Activated naive CD4-positive, alpha-beta T cell treated with anti-CD3 and anti-CD28 coated beads for 36 hours (primary cell): ENCODE measurements at regions of chr4 and their contacts with region 1.

Region 1: GRCh38 chr4:145061318-145061920 is 36.6 kb downstream of the ANAPC10 start:
- DNase-seq: no peak
- H3K4me3 Mint-ChIP-seq: no peak overlapping the region
- H3K27ac Mint-ChIP-seq: no peak overlapping the region
- H3K4me1 Mint-ChIP-seq: peaks cover 23% of the 10 kb centered on the region
- H3K27me3 Mint-ChIP-seq: no peaks in the 10 kb centered on the region

Region 2: DNA sequence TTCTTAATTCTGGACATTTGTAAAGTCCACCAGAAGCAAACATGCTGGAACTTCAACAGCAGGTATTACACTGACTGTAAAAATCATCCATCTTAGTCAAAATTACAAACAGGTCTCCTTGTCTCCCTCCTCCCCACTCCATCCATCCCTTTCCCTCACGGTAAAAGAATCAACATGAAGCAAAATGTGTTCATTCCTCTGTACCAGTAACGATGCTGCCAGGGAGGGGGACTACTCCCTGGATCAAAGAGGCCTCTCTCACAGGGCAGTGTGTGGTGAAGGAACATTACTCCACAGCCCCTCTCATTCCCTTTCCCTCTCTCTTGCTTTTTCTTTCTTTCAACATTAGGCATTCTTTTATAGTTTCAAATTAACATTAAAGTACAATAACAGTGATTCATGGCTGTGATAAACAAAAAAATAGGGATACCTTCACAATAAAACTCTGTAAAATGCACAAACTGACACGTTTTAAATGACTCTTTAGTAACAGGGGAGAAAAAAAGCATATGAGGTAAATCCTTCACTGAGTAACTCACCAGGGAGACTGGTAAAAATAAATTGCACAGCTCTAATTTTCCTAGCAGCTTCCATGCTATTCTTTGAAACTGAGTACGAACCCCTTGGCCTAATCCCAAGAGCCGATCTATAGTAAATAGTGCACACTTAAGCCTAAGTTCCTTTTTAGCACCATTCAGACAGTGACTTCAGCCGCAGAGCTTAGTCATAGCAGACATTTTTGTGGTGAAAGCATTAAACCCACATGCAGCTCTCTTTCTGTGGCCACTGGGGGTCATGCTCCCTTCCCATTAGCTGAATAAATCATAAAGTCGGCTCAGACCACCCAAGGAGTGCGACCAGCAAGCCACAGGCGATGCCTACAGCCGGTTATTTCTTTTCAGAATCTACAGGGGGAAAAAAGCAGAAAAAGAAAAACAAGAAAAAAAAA is 705.3 kb before region 1 on chr4:
- CTCF ChIA-PET with region 1: no interaction called
- intact Hi-C with region 1: loop called (anchors 5 kb)
- DNase-seq: peak; percentile 15
- H3K4me3 Mint-ChIP-seq: no peak overlapping the region
- H3K27ac Mint-ChIP-seq: no peak overlapping the region
- H3K4me1 Mint-ChIP-seq: no peaks in the 10 kb centered on the region
- H3K27me3 Mint-ChIP-seq: peaks cover 10% of the 10 kb centered on the region

Region 3: DNA sequence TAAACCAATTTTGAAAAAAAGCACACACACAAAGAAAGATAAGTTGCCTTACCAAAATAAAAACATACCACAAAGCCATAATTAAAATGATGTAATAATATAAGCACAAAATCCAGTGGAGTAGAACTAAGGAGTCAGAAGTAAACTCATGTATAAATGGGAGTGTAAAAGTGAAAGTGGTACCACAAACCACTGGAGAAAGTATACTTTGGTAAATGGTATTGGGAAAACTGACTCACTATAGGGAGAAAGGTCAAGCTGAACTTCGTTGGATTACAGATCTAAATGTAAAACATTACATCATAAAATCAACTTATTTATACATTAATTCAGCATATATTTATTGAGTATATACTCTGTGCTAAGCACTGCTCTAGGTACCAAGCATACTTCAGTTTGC is 461.8 kb before region 1 on chr4:
- CTCF ChIA-PET with region 1: no interaction called
- intact Hi-C with region 1: no loop called
- DNase-seq: no peak
- H3K4me3 Mint-ChIP-seq: no peak overlapping the region
- H3K27ac Mint-ChIP-seq: no peak overlapping the region
- H3K4me1 Mint-ChIP-seq: no peaks in the 10 kb centered on the region
- H3K27me3 Mint-ChIP-seq: no peaks in the 10 kb centered on the region

Region 4: DNA sequence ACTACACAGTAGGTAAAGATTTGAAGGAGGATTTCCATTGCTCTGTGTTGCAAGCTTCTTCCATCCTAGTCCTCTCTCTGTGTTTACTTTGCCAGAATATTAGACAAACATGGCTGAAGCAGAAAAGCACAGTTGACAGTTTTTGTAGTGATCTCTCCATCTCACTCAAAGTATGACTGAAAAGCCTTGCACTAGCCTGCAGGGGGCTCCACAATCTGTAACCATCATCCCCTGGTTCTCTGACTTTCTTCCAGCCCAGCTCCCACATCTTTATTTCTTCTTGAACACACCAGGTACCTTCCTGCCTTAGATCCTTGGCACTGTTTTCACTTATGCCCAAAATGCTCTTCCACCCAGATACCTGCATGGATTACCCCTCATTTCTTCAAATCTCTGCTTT is 449.6 kb before region 1 on chr4:
- CTCF ChIA-PET with region 1: no interaction called
- intact Hi-C with region 1: loop called (anchors 10 kb)
- DNase-seq: peak; percentile 20
- H3K4me3 Mint-ChIP-seq: no peak overlapping the region
- H3K27ac Mint-ChIP-seq: no peak overlapping the region
- H3K4me1 Mint-ChIP-seq: no peaks in the 10 kb centered on the region
- H3K27me3 Mint-ChIP-seq: no peaks in the 10 kb centered on the region

Region 5: GRCh38 chr4:144645631-144646522 is 415.5 kb before region 1 on chr4 and contains the start of gene HHIP:
- CTCF ChIA-PET with region 1: no interaction called
- intact Hi-C with region 1: loop called (anchors 2 kb)
- DNase-seq: peak; percentile 25
- H3K4me3 Mint-ChIP-seq: peak within 1 kb of the TSS; percentile 77
- H3K27ac Mint-ChIP-seq: no peak within 1 kb of the TSS
- H3K4me1 Mint-ChIP-seq: peaks cover 15% of the 10 kb centered on the region
- H3K27me3 Mint-ChIP-seq: peaks cover 46% of the 10 kb centered on the region
- total RNA-seq, gene HHIP: not detected

Region 6: GRCh38 chr4:144787365-144788258 is 273.8 kb before region 1 on chr4:
- CTCF ChIA-PET with region 1: no interaction called
- intact Hi-C with region 1: loop called (anchors 5 kb)
- DNase-seq: no peak
- H3K4me3 Mint-ChIP-seq: no peak overlapping the region
- H3K27ac Mint-ChIP-seq: no peak overlapping the region
- H3K4me1 Mint-ChIP-seq: no peaks in the 10 kb centered on the region
- H3K27me3 Mint-ChIP-seq: peaks cover 2% of the 10 kb centered on the region

Region 7: GRCh38 chr4:145019346-145019745 is 42.1 kb before region 1 on chr4:
- CTCF ChIA-PET with region 1: no interaction called
- intact Hi-C with region 1: loop called (anchors 5 kb)
- DNase-seq: peak; percentile 17
- H3K4me3 Mint-ChIP-seq: peak overlapping the region; percentile 1
- H3K27ac Mint-ChIP-seq: peak overlapping the region; percentile 59
- H3K4me1 Mint-ChIP-seq: peaks cover 36% of the 10 kb centered on the region
- H3K27me3 Mint-ChIP-seq: no peaks in the 10 kb centered on the region

Region 8: DNA sequence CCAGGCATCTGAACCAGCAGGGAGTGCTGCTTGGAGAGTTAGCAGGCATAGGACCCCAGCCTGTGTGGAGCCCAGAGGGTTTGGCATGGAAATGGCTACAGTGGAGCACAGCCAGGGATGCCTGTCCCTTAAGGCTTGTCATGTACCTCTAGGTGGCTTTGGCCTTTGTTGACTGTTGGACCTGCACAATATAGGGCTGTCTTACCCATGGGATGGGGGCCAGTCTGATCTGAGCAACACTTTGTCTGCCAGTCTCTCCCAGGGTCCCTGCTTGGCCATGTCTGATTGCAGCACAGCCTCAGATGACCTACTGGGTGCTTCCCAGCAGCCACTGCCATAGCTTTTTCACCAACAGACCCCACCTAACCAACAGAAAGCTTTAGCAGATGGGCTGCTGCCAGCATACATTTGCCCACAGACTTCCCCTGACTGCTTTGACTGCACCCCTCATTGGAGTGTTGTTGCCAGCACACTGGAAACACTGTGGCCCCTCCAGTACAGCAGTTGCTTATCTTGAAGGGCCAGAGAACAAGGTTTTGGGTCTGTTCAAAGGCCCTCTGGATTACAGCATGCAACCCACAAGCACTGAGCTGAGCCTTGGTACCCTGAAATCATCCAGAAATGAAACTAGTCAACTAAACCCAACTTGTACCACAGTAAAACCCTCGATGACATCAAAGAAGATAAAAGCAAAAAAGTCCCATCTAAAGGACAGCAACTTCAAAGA is 14.5 kb after region 1 on chr4:
- CTCF ChIA-PET with region 1: interaction called, 17 read pairs
- intact Hi-C with region 1: no loop called
- DNase-seq: no peak
- H3K4me3 Mint-ChIP-seq: no peak overlapping the region
- H3K27ac Mint-ChIP-seq: no peak overlapping the region
- H3K4me1 Mint-ChIP-seq: peaks cover 34% of the 10 kb centered on the region
- H3K27me3 Mint-ChIP-seq: no peaks in the 10 kb centered on the region